GM10248 (cell line): ENCODE measurements at regions of chr5 and their contacts with region 1.

Region 1: DNA sequence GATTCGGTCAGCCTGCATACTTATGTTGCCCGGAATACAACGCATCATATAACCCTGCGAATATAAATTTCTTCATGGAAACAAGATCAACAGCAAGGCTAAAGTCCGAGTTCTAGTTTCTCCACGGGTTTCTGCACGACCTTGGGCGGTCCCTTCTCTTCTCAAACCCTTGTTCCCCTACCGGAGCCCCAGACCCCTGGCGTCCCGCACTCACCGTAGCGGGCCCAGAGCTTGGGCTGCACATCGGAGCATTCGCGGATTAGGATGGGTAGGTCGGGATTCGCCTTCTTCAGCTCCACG is 438 bp downstream of the NDUFA2 start:
- DNase-seq: no peak
- CTCF ChIP-seq: no peak

Region 2: DNA sequence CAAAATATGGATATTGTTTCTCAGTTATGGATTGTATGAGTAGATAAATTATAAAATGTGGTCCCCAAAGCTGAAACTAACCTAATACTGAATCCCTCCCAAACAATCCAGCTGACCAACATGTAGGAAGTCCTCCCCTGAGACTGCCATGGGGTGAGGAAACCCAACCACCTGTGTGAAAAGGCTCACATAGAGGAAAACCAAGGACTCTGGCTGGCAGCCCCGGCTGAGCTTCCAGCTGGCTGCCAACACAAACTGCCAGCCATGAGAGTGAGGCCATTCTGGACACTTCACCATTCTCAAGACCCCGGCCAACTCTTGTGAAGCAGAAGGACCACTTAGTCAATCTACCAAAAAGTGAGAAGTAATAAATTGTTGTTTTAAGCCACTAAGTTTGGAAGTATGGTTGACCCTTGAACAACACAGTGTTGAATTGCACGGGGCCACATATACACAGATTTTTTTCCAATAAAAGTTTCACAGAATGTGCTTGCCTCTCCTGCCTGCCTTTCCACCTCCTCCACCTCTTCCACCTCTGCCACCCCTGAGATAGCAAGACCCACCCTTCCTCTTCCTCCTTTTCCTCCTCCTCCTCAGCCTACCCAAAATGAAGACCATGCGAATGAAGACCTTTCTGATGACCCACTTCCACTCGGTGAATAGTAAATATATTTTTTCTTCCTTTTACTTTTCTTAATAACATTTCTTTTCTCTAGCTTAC is 588.6 kb before region 1 on chr5:
- CTCF ChIA-PET with region 1: no interaction called
- POLR2A ChIA-PET with region 1: no interaction called
- DNase-seq: no peak
- CTCF ChIP-seq: no peak

Region 3: GRCh38 chr5:140401362-140402257 is 245.4 kb before region 1 on chr5 and contains the start of gene ANKHD1:
- CTCF ChIA-PET with region 1: interaction called, 3 read pairs
- POLR2A ChIA-PET with region 1: interaction called, 14 read pairs
- DNase-seq: peak; percentile 93
- CTCF ChIP-seq: no peak

Region 4: DNA sequence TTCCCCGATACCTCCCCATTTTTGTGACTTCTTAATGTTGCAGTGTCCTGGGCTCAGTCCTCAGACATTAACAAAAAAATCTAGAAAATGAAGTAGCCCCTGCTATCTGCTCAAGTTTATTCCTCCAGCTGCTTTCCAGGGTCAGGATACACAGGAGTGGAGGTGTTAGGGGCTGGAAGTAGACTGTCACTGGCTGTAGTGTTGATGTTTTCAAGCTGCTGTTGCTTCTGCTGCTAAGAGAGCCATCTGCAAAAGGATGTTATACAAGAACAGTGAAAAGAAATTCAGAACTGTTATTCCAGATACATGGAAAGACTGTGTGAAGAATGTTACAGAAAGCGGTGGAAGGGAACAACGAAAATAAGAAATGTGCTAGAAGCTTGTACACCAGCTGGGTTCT is 24.7 kb before region 1 on chr5:
- CTCF ChIA-PET with region 1: no interaction called
- POLR2A ChIA-PET with region 1: no interaction called
- DNase-seq: no peak
- CTCF ChIP-seq: no peak

Region 5: DNA sequence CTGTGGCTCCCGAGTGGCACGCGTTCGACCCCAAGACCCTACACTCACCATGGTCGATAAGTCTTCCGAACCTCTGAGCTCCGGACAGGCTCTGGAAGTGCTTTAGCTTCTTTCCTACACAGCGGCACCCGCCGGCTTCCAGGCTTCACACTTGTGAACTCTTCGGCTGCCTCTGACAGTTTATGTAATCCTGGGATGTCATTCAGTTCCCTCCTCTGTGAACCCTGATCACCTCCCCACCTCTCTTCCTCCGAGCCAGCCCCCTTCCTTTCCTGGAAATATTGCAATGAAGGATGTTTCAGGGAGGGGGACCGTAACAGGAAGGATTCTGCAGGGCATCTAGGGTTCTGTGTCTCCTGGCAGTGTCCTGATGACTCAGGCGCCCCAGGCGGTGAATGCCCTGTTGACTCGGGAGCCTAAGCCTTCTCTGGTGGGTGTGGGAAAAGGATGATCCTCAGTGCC is 13.9 kb before region 1 on chr5 and contains the start of gene CD14:
- CTCF ChIA-PET with region 1: interaction called, 18 read pairs
- POLR2A ChIA-PET with region 1: interaction called, 4 read pairs
- DNase-seq: no peak
- CTCF ChIP-seq: no peak

Region 6: DNA sequence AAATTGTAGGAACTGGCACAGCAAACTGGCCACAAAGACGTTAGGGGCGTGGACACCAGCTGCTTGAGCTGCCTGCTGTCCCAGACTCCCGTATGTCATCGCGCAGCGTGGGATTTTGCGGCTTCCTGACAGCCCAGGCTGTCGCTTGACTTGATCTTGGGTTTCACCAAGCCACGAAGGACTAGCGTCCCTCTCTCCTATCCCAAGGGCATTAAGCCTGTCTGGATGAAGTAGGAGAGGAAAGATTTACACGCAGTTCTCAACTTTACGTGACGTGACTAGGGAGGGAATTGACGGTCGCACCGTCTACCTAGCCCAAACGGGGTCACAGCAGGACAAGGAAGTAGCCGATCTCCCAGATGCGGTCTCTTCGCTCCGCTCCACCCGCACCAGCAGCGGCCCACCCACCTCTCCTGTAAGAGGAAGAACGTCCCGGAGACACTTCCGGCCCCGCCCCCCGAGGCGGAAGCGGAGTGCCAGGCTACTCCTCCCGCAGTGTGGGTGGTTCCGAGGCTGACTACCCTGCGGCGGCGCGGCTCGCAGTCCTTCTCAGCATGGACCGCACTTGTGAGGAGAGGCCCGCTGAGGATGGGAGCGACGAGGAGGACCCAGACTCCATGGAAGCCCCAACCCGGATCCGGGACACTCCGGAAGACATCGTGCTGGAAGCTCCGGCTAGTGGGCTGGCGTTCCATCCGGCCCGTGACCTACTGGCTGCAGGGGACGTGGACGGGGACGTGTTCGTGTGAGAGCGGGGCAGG is 17.5 kb after region 1 on chr5 and contains the start of gene WDR55:
- CTCF ChIA-PET with region 1: interaction called, 16 read pairs
- POLR2A ChIA-PET with region 1: interaction called, 10 read pairs
- DNase-seq: peak; percentile 94
- CTCF ChIP-seq: no peak